GM10248 (cell line): ENCODE measurements at regions of chr15 and their contacts with region 1.

Region 1: GRCh38 chr15:34969340-34970097 is at the start of gene AQR:
- DNase-seq: peak; percentile 93
- CTCF ChIP-seq: peak; percentile 82

Region 2: DNA sequence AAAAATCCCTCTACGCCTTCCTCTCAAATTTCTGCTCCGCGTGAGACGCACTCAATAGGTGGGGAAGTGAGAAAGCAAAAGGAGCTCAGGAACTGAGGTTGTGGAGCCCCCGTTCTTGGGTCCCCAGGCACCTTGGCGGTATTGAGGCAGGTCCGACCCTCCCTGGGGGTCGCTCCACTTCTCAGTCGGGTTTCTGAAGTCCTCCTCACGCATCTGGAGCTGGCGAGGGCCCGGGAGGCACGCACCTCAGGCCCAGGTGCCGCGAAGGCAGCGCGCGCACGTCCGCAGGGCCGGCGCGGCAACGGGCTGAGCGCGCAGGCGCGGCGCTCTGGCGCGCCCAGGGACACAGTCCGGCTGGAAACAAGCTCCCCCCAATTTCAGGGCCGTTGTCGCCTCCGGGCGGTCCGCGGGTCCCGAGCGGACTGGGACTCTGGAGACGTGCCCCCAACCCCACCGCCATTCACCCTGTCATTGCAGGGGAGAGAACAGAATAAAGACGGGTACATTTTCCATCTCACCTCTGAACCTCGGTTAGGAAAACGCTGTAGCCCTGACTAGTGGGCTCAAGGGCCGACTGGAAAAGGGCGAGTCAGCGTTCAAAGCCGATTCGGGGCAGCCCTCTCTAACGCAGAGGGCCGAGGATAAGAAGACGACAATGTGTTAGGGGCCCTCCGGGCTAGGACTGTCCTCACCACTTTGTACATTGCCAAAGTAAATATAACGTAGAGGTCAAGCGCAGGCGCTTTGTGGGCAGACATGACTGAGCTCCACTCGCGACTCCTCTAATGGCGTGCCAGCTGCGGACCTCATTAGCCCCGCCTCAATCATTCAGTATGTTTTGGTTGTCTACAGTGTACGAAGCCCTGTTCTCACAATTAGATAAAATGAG is 18.7 kb after region 1 on chr15 and contains the start of gene ZNF770:
- CTCF ChIA-PET with region 1: interaction called, 14 read pairs
- POLR2A ChIA-PET with region 1: interaction called, 16 read pairs
- DNase-seq: peak; percentile 86
- CTCF ChIP-seq: no peak